BJ (cell line): ENCODE measurements at regions of chr3 and their contacts with region 1.

Region 1: DNA sequence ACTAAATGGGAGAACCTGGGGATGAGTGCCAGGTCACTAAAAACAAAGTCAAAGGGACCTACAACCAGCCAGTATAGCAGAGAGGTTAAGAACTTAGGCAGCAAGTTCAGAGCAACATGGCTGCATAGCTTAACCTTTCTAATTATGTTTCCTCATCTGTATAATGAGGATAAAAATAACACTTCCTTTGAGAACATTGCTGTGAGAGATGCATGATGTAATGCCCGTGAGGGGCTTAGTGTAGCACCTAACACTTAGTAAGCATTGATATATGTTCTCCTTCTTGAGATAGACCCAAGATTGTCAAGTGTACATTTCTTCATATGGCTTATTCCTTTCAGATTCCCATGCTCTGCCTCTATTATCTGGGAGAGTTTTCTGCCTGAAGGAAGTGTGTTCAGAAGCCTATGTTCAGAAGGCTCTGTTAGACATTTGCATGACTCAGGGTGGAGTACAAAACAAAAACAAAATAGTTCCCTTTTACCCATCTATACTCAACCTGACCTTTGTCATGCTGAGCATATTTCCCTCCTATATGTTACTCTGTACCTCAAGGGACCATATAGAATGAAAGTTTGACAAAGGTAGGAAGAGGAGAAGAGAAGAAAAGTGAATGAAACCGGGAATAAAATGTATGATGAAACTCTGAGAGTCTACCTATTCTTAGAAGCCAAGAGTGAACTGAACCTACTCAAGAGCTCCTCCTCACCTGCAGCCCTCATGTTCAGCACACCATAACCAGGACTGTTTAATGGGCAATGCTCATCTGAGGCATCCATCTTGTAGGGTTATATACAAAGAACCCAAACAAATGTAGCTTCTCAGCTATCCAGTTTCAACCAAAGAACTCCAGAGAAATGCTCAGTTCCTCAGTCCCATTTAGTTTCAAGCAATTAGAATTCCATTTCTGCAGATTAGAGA is 70.7 kb upstream of the KCNMB2 start:
- DNase-seq: no peak
- H3K4me3 ChIP-seq: no peak overlapping the region
- H3K27me3 ChIP-seq: no peaks in the 10 kb centered on the region; the same call in 1 of the 2 replicates
- CTCF ChIP-seq: no peak

Region 2: DNA sequence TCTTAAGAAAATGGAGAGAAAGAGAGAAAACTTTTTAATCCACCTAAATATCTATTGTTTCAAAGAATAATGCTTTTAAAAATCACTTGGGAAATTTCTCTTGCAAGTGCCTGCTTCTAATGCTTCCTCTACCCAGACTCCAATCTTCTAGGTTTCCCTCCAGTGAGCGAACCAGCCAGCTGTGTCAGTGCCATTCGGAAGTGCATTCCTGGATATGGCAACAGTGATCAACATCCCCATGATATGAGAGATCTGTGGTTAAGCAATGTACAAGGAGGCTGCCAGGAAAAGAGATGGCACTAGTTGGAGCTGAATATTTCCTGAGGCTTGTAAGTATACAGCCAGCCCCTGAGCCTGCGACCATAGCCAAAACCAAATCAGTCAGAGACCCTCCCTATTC is 17.5 kb after region 1 on chr3:
- CTCF ChIA-PET with region 1: no interaction called
- POLR2A ChIA-PET with region 1: interaction called, 27 read pairs
- DNase-seq: no peak
- H3K4me3 ChIP-seq: no peak overlapping the region
- H3K27me3 ChIP-seq: no peaks in the 10 kb centered on the region
- CTCF ChIP-seq: no peak